ENCODE measurements at regions of chr7 and their contacts with region 1.

Region 1: GRCh38 chr7:29239638-29240037 is 45.1 kb downstream of the CHN2 start:
- DNase-seq: no peak
- ATAC-seq: no peak
- H3K4me3 Mint-ChIP-seq: no peak overlapping the region
- H3K27ac Mint-ChIP-seq: no peak overlapping the region
- H3K4me1 Mint-ChIP-seq: peaks cover 16% of the 10 kb centered on the region
- H3K27me3 Mint-ChIP-seq: peaks cover 7% of the 10 kb centered on the region
- CTCF ChIP-seq: no peak

Region 2: GRCh38 chr7:29217113-29217512 is 22.5 kb before region 1 on chr7:
- CTCF ChIA-PET with region 1: no interaction called
- POLR2A ChIA-PET with region 1: interaction called, 17 read pairs
- intact Hi-C with region 1: no loop called
- DNase-seq: no peak
- ATAC-seq: no peak
- H3K4me3 Mint-ChIP-seq: no peak overlapping the region
- H3K27ac Mint-ChIP-seq: no peak overlapping the region
- H3K4me1 Mint-ChIP-seq: no peaks in the 10 kb centered on the region
- H3K27me3 Mint-ChIP-seq: peaks cover 2% of the 10 kb centered on the region
- CTCF ChIP-seq: no peak

Region 3: GRCh38 chr7:29285444-29285793 is 45.8 kb after region 1 on chr7:
- CTCF ChIA-PET with region 1: no interaction called
- POLR2A ChIA-PET with region 1: no interaction called
- intact Hi-C with region 1: loop called (anchors 1 kb)
- DNase-seq: no peak
- ATAC-seq: peak; percentile 16
- H3K4me3 Mint-ChIP-seq: no peak overlapping the region
- H3K27ac Mint-ChIP-seq: no peak overlapping the region
- H3K4me1 Mint-ChIP-seq: peaks cover 37% of the 10 kb centered on the region
- H3K27me3 Mint-ChIP-seq: peaks cover 5% of the 10 kb centered on the region
- CTCF ChIP-seq: no peak

Region 4: DNA sequence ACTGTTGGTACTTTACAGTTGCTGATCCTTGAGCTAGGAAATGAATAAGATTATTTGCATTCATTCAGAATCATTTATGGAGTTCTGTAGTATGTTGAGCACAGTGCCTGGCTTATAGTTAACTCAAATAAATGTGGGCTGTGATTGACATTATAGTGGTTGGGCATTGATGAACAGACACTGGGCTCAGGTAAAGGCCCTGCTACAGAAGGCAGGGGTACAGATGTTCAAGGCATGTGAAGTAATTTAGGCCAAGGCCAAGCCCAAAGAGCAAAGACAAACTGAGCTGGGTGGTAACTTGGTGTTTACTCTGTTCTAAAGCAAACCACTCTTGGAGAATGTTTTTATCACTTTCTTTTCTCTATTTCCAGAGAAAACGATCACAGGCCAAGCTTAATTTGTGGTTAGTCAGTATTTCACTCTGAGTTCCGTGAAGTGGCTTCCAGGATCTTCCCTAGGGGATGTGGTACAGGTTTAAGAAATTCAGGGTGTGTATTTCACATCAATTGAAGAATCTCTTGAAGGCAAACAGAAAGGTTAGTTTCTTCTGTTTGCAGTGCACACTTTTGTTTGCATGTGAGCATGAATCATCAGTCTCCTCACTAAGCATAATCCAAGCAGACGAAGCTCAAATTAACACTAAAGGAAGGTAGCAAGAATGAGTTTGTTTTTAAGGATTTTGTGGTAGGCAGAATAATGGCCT is 210.1 kb after region 1 on chr7:
- CTCF ChIA-PET with region 1: no interaction called
- POLR2A ChIA-PET with region 1: no interaction called
- intact Hi-C with region 1: no loop called
- DNase-seq: no peak
- ATAC-seq: no peak
- H3K4me3 Mint-ChIP-seq: no peak overlapping the region
- H3K27ac Mint-ChIP-seq: no peak overlapping the region
- H3K4me1 Mint-ChIP-seq: no peaks in the 10 kb centered on the region
- H3K27me3 Mint-ChIP-seq: no peaks in the 10 kb centered on the region
- CTCF ChIP-seq: no peak

Measured in activated B cell treated with CpG ODN at 0.5 μM for 24 hours (primary cell).